Ascending aorta (tissue), 2 donors: ENCODE measurements at regions of chrX and their contacts with region 1.

Region 1: DNA sequence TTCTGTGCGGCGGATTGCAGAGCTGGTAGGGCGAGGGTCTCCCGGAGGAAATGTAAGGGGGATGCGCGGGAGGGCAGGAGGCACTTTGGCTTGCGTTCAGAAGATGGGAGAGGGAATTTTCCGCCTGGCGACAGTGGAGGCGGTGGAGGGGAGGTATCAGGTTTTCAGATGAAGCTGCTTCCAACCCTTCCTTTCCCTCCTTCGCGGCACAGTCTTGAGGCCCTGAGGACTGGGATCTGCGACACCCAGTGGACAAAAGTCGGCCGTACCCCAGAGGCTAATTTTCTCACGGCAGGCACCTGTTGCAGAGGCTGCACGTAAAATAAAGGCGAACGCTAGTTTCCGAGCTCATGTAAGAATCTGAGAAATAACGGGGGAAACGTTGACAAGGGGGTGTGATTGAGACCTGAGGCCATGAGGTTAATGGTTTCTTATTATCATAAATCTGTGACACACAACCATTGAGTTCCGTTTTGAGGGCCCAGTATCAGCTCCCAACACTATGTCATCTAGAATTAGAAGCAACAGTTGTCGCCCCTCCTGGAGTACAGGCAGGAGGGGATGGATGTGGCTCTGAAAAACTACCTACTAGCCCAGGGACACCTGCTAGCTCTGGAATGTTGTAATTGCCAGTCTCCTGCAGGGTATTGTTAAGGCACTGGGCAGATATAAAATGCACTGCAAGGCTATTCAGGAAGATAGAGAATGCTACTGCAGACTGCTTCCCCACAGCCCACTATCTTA is 1.1 kb downstream of the ZCCHC18 start:
- DNase-seq: peak in 1 of 2 donors; percentile 75
- H3K4me3 ChIP-seq: peak overlapping the region; percentile 46 to 57
- H3K27ac ChIP-seq: peak overlapping the region; percentile 69 to 77
- H3K4me1 ChIP-seq: no peaks in the 10 kb centered on the region
- H3K27me3 ChIP-seq: no peaks in the 10 kb centered on the region
- CTCF ChIP-seq: peak; percentile 35 to 63 (median 42)

Region 2: GRCh38 chrX:104098151-104098808 is 15.1 kb before region 1 on chrX:
- intact Hi-C with region 1: loop called (anchors 2 kb)
- DNase-seq: no peak
- H3K4me3 ChIP-seq: no peak overlapping the region
- H3K27ac ChIP-seq: no peak overlapping the region
- H3K4me1 ChIP-seq: no peaks in the 10 kb centered on the region
- H3K27me3 ChIP-seq: no peaks in the 10 kb centered on the region
- CTCF ChIP-seq: peak; percentile 39 to 64 (median 56)

Region 3: GRCh38 chrX:104165894-104166737 is 52.7 kb after region 1 on chrX and contains the start of gene FAM199X:
- intact Hi-C with region 1: loop called (anchors 2 kb)
- DNase-seq: peak; percentile 64 to 92
- H3K4me3 ChIP-seq: peak within 1 kb of the TSS; percentile 66 to 81
- H3K27ac ChIP-seq: peak within 1 kb of the TSS; percentile 88
- H3K4me1 ChIP-seq: no peaks in the 10 kb centered on the region
- H3K27me3 ChIP-seq: no peaks in the 10 kb centered on the region
- CTCF ChIP-seq: peak; percentile 50 to 72 (median 66)
- total RNA-seq, gene FAM199X: 10.4 TPM

Region 4: DNA sequence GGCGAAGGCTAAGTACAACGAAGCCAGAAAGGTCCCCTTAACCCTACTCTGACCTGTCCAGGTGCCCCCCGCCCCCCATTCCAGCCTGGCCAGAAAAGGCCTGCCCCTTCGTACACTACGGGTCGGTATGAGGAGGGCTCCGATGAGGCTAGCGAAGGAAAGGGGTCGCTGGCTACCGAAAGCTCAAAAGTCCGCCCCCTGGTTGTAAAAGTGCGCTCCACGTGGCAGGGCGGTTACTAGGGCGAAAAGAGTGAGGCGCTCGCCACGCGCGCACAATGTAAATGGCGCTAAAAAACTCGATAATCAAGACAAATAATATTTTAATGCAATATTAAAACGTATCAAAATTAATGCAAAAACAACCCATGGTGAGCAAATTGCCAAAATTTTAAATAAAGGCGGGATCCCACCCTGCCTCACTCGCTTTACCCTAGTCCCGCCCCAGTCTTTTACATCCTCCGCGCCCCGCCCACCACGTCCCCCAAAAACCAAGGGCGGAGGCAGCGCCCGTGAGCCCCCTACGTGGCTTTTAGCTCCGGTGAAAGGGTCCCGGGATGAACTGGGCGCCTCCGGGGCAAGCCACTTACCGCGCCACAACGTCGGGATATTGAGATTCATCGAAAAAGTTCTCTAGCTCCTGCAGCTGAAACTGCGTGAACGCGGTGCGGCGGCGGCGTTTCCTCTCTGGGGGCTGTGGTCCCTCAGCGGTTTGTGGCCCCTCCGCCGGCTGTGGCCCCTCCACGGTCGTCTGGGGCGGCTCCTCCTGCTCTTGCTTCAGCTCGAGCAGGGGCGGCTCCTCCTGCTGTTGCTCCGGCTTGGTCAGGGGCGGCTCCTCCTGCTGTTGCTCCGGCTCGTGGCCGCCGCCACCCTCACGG is 140.4 kb after region 1 on chrX:
- intact Hi-C with region 1: no loop called
- DNase-seq: no peak
- H3K4me3 ChIP-seq: peak overlapping the region; percentile 11 to 39
- H3K27ac ChIP-seq: no peak overlapping the region
- H3K4me1 ChIP-seq: no peaks in the 10 kb centered on the region
- H3K27me3 ChIP-seq: peaks cover 13% of the 10 kb centered on the region
- CTCF ChIP-seq: no peak